Right ventricle myocardium inferior (tissue), 1 donor: ENCODE measurements at regions of chr5 and their contacts with region 1.

Region 1: DNA sequence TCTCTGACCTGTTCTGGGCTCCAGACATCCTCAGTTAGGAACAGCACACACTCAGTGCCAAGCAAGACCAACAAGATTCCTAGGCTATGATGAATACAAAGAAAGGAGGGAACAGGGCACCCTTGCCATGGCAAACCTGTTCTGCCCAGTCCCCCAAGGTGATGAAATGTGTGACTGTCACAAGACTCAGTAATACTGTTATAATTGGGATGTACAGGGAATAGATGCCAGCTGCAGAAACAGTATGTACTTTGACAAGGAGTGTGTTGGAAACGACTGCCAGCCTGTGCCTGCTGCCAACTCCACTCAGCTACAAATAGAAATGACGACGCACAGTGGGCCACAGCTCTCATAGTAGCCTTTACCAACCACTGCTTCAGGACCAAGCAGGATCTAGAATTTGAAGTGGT is 453.0 kb downstream of the EFNA5 start:
- DNase-seq: peak; percentile 75
- ATAC-seq: peak; percentile 96

Region 2: DNA sequence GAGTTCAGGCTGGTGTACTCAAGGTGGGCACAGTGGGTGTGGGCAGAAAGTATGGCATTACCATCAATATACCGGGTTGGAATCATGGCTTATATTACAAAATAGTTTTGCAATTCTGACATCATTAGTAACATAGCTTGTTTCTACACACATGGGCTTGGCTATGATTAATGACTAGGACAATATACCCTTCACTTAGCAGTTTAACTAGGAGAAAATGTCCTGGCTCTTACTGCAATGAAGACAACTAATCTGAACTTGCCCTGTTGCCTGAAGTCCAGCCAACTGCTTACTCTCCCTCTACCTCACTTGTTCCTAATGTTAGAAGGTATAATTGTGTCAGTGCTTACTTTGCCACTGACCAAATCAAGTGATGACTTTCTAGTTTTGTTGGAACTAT is 159.5 kb before region 1 on chr5:
- intact Hi-C with region 1: loop called (anchors 5 kb)
- DNase-seq: no peak
- ATAC-seq: peak; percentile 71

Region 3: DNA sequence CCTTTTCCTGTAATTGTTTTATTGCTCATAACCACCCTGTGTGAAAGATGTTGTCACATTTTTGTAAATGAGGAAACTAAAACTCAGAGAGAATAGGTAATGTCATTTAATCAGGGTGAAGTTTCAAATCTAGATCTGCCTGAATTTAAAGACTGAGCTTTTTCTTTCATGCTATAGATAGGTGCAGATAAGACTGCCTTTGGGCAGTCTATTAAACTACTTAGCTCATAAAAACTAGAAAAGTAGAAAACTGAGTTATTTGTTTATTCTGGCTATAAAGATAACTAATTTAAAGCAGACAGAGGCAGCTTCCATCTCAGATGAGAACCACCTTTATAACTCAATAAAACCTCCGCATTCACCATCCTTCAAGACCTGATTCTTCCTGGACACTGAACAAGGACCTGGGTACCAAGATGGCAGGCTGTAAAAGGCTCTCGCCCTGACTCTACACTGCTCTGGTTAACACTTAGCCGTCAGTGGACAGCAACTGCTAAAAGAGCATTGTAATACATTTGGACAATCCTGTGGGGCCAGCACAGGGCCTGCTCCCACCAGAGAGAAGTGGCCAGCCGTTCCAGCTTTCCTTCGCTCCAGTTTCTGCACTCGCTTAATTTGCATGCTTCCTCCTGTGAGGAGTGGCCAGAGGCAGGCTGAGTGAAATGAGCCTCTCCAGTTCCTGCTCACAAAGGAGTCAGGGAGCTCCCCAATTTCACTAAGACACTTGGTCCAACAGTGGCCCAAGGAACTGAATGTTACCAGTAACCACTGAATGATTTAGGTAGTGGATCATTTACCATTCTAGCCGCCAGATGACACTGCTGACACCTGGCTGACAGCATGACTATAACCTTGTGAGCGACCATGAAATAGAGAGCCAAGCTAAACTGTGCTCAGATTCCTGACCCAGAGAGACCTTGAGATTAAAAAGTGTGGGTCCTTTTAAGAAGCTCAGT is 113.4 kb before region 1 on chr5:
- intact Hi-C with region 1: loop called (anchors 2 kb)
- DNase-seq: peak; percentile 28
- ATAC-seq: peak; percentile 94

Region 4: DNA sequence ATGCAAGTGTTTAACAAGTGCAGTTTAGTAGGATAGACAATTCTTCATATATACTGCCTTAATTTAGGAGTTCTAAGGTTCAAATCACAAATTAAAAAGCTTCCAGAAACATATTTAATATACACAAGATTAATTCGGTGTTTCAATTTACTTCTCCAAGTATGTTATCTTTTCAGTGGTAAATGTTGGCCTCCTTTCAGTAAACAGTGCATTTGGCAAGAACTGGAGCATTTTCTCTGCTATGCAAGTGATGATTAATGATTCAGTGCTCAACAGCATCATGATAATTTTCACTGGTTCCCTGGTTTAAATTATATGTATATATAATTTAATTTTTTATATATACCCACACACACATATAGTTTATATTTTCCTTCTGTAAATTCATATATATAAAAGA is 88.7 kb before region 1 on chr5:
- intact Hi-C with region 1: loop called (anchors 5 kb)
- DNase-seq: no peak
- ATAC-seq: no peak

Region 5: DNA sequence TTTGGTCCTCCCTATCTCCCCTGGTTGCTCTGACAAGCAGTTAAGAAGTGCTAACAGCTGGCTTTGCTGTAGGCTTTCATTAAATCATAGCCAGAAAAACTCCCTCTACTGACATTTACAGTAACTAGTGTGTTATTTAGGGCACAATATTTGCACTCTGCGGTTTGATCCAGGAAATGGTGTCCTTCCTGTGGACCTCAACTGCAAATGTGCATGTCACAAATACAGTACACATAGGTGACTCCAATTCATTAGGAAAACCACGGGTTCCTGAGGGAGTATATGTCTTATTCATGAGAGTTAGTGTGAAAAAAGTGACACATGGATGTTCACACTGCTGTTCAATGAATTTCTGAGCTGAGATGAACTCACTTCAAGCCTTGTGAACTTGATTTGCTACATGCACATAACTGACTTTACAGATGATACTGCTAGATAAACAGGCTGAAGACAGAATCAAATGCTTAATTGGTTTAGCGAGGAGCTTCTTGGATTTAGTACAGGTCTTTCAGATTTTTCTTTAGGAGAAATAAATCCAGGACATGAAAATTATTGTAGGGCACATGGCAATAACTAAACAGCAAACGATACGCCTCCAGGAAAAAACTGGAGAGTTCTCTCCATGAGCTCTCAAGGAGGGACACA is 171.5 kb after region 1 on chr5:
- intact Hi-C with region 1: loop called (anchors 5 kb)
- DNase-seq: no peak
- ATAC-seq: peak; percentile 74

Region 6: DNA sequence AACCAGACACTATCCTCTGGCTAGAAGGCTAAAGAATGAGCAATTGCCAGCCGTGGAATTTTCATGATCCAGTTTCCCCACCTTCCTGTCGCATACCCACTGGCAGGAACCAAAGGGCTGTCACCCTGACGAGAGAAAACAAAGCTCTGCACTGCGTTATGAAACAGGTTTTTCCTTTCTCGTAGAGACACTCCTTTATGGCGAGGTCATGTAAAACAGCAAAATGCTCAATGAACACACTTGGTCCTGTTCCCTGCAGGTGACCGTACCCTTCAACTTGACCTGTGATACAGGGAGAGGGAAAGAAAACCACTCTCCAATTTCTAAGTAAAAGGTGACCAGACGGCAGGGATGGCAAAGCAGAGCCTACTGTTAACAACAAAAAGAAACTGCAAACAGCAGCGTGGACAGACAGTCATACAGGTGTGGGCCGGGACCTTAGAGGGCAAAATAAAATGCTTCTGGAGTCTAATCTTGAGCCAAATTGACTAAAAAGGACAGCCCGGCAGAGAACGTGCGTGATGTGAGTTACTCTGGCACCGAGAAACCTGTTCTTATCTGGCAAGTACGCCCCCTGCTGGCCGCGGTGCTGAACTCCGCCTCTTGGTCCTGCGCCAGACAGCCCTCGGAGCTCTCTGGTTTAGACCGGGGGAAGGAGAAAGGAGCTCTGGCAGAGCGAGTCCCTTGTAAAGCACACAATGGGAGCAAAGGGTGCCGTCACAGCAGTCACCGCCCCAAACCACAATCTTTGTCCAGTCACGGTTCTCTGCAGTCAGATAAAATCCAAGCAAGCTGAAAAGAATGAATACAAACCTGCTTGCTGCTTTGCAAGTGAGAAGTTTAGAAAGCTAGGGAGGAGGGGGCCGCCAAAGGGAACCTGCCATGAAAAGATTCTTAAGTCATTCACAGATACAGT is 354.2 kb after region 1 on chr5:
- intact Hi-C with region 1: loop called (anchors 10 kb)
- DNase-seq: peak; percentile 94
- ATAC-seq: peak; percentile 88